ENCODE measurements at regions of chr11 and their contacts with region 1.

Region 1: GRCh38 chr11:116276051-116277044 is 496.4 kb downstream of the BUD13 start:
- DNase-seq: peak; percentile 85
- ATAC-seq: peak; percentile 88
- H3K4me3 Mint-ChIP-seq: no peak overlapping the region
- H3K27ac Mint-ChIP-seq: no peak overlapping the region
- H3K4me1 Mint-ChIP-seq: no peaks in the 10 kb centered on the region
- H3K27me3 Mint-ChIP-seq: peaks cover 4% of the 10 kb centered on the region
- CTCF ChIP-seq: peak; percentile 99

Region 2: GRCh38 chr11:115334932-115335788 is 941.2 kb before region 1 on chr11:
- CTCF ChIA-PET with region 1: no interaction called
- POLR2A ChIA-PET with region 1: no interaction called
- intact Hi-C with region 1: loop called (anchors 5 kb)
- DNase-seq: no peak
- ATAC-seq: no peak
- H3K4me3 Mint-ChIP-seq: no peak overlapping the region
- H3K27ac Mint-ChIP-seq: no peak overlapping the region
- H3K4me1 Mint-ChIP-seq: no peaks in the 10 kb centered on the region
- H3K27me3 Mint-ChIP-seq: no peaks in the 10 kb centered on the region
- CTCF ChIP-seq: peak; percentile 80

Measured in activated CD8-positive, alpha-beta T cell treated with anti-CD3 and anti-CD28 coated beads for 36 hours (primary cell).